Heart left ventricle (tissue), 16 donors: ENCODE measurements at regions of chr2 and their contacts with region 1.

Region 1: GRCh38 chr2:25951071-25951547 is 31.2 kb downstream of the KIF3C start:
- DNase-seq: peak; percentile 74 to 86 (median 80)
- ATAC-seq: peak; percentile 86 to 97 (median 95)
- H3K4me3 ChIP-seq: peak overlapping the region in 1 of 12 donors; percentile 26
- H3K27ac ChIP-seq: no peak overlapping the region
- H3K4me1 ChIP-seq: peaks cover 0 to 10% (median 0%) of the 10 kb centered on the region in 12 donors
- H3K27me3 ChIP-seq: no peaks in the 10 kb centered on the region
- CTCF ChIP-seq: peak; percentile 82 to 97 (median 94)
- POLR2A ChIP-seq: no peak

Region 2: DNA sequence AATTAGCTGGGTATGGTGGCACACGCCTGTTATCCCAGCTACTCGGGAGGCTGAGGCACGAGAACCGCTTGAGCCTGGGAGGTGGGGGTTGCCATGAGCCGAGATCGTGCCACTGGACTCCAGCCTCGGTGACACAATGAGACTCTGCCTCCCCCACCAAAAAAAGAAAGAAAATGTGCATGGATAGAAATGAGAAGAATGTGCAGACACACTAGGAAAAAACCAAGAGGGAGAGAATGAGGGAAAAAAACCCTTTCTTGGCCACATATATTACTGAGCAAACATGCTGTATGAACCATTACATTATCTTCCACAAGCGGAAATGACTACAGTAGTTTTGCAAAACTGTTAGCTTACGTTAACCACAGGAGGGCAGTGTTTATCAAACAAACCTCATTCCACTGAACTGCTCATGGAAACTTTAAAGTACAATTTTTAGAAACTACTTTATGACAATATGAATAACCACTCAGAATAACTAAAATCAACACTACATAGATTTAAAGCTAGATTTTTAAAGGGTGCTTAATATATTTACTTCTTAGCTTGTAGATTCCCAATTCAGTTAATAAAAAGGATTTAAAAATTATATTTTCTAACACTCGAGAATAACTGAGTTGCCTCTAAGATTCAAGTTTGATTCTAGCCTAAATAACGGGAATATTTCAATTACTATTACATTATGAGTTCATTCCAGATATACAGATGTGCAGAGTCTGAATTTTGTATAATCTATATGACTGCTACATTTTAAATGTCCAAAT is 99.2 kb before region 1 on chr2:
- intact Hi-C with region 1: loop called in 8 of 10 experiments (anchors 5 to 10 kb)
- DNase-seq: no peak
- ATAC-seq: peak; percentile 73 to 93 (median 92)
- H3K4me3 ChIP-seq: peak overlapping the region in 1 of 12 donors; percentile 30
- H3K27ac ChIP-seq: peak overlapping the region in 1 of 12 donors; percentile 38
- H3K4me1 ChIP-seq: peaks cover 0 to 45% (median 8%) of the 10 kb centered on the region in 12 donors
- H3K27me3 ChIP-seq: no peaks in the 10 kb centered on the region
- CTCF ChIP-seq: peak; percentile 53 to 84 (median 74)
- POLR2A ChIP-seq: no peak

Region 3: DNA sequence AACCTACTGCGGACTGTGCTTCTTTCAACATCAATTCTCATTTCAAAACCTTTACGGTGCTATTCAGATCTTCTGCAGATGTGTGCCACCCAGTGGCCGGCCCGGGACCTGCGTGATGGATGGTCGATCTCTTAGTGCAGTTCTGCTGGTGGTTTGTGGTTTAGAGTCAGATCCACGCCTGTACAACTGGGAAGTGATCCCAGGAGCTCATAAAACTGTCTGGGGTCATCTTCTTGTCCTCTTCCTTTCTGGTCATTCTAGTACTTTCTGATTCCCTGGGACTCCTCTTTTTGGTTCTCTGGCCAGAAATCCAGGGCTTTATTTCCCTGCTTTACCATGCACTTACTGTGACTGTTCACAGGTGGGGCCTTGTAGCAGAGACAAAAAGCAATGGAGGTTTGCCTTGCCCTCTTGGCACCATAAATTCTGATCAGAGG is 379.0 kb after region 1 on chr2:
- intact Hi-C with region 1: loop called in 3 of 10 experiments (anchors 5 to 10 kb)
- DNase-seq: peak; percentile 76 to 91 (median 85)
- ATAC-seq: peak; percentile 73 to 93 (median 91)
- H3K4me3 ChIP-seq: no peak overlapping the region
- H3K27ac ChIP-seq: no peak overlapping the region
- H3K4me1 ChIP-seq: peaks cover 0 to 10% (median 0%) of the 10 kb centered on the region in 12 donors
- H3K27me3 ChIP-seq: no peaks in the 10 kb centered on the region
- CTCF ChIP-seq: peak; percentile 77 to 92 (median 86)
- POLR2A ChIP-seq: no peak